Ovary (tissue), 10 donors: ENCODE measurements at regions of chrX and their contacts with region 1.

Region 1: GRCh38 chrX:104007242-104007641 is 6.3 kb downstream of the H2BW1 start:
- DNase-seq: no peak
- H3K4me3 ChIP-seq: no peak overlapping the region
- H3K27ac ChIP-seq: no peak overlapping the region
- H3K4me1 ChIP-seq: no peaks in the 10 kb centered on the region
- H3K27me3 ChIP-seq: no peaks in the 10 kb centered on the region
- CTCF ChIP-seq: no peak
- EP300 ChIP-seq: no peak
- POLR2A ChIP-seq: no peak

Region 2: DNA sequence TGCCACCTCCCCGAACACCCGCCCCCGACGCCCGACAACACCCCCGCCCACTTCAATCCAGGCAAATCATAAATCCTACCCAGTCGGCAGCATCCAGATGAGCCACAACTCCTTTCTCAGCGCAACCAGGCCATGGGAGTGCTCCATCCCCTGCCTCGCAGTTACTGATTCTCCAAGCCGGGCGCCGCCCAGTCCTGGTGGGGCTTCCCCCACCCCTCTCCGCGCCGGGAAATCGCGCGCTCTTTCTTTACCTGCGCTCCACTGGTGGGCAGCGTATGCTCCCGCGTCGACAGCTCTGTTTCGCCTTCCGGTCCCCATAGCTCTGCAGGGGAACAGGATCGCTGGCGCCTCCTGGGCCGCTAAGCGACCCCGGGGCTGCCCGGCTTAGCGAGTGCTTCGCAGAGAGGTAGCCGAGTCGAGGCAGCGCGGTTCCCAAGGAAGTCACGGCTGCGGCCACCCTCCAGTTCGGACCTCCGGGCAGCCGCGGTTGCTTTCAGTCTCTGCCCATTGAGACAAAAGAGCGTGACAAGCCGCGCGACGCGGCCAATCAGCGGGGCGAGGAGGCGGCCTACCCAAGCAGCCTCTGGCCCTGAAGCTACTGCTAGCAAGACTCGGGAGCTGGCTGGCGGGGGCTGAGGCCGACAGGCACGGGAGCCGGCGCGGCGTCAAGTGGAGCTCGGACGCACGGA is 88.5 kb before region 1 on chrX:
- intact Hi-C with region 1: loop called in 1 of 4 experiments (anchors 1 kb)
- DNase-seq: peak; percentile 53 to 69 (median 62)
- H3K4me3 ChIP-seq: peak overlapping the region; percentile 55
- H3K27ac ChIP-seq: peak overlapping the region; percentile 52 to 85
- H3K4me1 ChIP-seq: no peaks in the 10 kb centered on the region
- H3K27me3 ChIP-seq: no peaks in the 10 kb centered on the region
- CTCF ChIP-seq: no peak
- EP300 ChIP-seq: no peak
- POLR2A ChIP-seq: no peak